Endothelial cell of umbilical vein (primary cell): ENCODE measurements at regions of chr2 and their contacts with region 1.

Region 1: DNA sequence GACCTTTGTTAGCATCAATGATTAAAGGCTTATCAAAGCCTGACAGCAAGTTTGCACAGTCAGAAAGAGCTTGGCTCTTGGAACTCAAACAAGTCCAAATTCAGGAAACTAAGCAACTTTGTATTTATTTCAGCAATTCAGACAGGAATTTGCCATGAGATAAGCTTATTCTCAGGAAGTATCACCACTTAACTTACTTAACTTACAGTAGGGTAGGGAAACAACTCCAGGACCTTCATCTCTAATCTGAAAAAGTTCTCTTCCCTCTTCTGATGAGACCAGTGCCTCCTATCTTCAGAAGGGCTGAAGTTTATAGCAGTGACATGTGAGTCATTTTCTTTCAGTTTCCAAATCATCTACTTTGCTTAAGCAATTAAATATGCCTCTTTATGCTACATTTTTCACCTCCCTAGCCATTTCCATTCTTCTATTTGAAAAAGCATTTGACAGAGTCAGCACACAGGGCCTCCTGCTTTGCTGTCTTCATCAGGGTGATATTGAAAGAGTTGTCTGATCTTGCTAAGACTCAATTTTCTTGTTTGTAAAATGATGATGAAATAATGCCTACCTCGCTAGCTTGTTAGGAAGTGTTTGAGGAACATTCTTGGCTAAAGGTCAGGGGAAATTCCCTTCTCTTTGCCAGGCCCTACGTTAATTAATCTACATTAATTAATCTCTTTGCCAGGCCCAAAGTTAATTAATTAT is 389.4 kb downstream of the RND3 start:
- DNase-seq: peak; percentile 91
- H3K4me3 ChIP-seq: peak overlapping the region in 1 of 3 experiments; percentile 31
- H3K27ac ChIP-seq: peak overlapping the region; percentile 58
- H3K4me1 ChIP-seq: peaks cover 19% of the 10 kb centered on the region
- H3K27me3 ChIP-seq: no peaks in the 10 kb centered on the region
- CTCF ChIP-seq: peak; percentile 15 to 19
- POLR2A ChIP-seq: peak; percentile 45

Region 2: DNA sequence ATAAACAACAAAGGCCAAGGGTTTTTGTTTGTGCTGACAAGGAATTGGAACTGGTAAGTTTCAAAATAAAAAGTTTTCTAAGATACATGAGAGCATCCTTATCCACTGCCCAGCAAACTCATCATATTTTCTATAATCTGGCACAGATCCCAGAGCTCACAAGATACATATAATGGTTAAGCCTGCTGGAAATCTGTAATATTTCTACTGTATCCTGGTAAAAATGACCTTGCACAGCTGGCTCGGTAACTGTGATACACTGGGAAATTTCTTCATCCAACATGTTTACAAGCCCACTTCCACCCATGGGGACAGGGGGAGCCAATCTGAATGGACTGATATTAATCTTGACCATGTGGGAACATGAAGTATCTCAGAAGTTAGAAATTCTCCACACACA is 85.1 kb before region 1 on chr2:
- CTCF ChIA-PET with region 1: no interaction called
- POLR2A ChIA-PET with region 1: no interaction called
- dilution Hi-C with region 1: no loop called
- intact Hi-C with region 1: no loop called
- DNase-seq: peak; percentile 24
- H3K4me3 ChIP-seq: no peak overlapping the region
- H3K27ac ChIP-seq: no peak overlapping the region
- H3K4me1 ChIP-seq: no peaks in the 10 kb centered on the region
- H3K27me3 ChIP-seq: no peaks in the 10 kb centered on the region
- CTCF ChIP-seq: no peak
- POLR2A ChIP-seq: no peak

Region 3: GRCh38 chr2:150027164-150027563 is 70.9 kb before region 1 on chr2:
- CTCF ChIA-PET with region 1: no interaction called
- POLR2A ChIA-PET with region 1: no interaction called
- dilution Hi-C with region 1: no loop called
- intact Hi-C with region 1: loop called (anchors 5 kb)
- DNase-seq: peak; percentile 82
- H3K4me3 ChIP-seq: no peak overlapping the region
- H3K27ac ChIP-seq: peak overlapping the region; percentile 28
- H3K4me1 ChIP-seq: peaks cover 21% of the 10 kb centered on the region
- H3K27me3 ChIP-seq: no peaks in the 10 kb centered on the region
- CTCF ChIP-seq: no peak
- POLR2A ChIP-seq: no peak

Region 4: DNA sequence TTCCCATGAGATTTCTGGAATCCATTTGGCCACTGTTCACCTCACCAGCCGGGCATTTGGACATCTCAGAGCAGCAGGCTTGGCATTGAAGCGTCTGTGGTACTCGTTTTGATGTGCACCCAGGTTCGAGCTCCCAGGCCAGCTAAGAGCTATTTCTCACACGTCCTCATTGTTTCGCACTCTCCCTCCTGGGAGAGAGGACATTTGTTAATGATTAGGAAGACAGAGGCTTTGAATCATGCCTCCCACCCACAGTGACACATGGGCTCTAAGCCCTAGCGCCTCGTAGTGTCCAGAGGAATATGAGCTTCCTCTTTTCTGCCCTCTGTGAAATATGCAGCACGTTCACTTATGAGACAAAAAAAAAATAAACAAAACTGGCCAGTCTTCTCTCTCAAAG is 27.7 kb after region 1 on chr2:
- CTCF ChIA-PET with region 1: interaction called, 5 read pairs
- POLR2A ChIA-PET with region 1: no interaction called
- dilution Hi-C with region 1: no loop called
- intact Hi-C with region 1: loop called (anchors 2 kb)
- DNase-seq: peak; percentile 7
- H3K4me3 ChIP-seq: no peak overlapping the region
- H3K27ac ChIP-seq: peak overlapping the region; percentile 42
- H3K4me1 ChIP-seq: peaks cover 25% of the 10 kb centered on the region
- H3K27me3 ChIP-seq: no peaks in the 10 kb centered on the region
- CTCF ChIP-seq: no peak
- POLR2A ChIP-seq: no peak